PC-3 (cell line): ENCODE measurements at regions of chr1 and their contacts with region 1.

Region 1: DNA sequence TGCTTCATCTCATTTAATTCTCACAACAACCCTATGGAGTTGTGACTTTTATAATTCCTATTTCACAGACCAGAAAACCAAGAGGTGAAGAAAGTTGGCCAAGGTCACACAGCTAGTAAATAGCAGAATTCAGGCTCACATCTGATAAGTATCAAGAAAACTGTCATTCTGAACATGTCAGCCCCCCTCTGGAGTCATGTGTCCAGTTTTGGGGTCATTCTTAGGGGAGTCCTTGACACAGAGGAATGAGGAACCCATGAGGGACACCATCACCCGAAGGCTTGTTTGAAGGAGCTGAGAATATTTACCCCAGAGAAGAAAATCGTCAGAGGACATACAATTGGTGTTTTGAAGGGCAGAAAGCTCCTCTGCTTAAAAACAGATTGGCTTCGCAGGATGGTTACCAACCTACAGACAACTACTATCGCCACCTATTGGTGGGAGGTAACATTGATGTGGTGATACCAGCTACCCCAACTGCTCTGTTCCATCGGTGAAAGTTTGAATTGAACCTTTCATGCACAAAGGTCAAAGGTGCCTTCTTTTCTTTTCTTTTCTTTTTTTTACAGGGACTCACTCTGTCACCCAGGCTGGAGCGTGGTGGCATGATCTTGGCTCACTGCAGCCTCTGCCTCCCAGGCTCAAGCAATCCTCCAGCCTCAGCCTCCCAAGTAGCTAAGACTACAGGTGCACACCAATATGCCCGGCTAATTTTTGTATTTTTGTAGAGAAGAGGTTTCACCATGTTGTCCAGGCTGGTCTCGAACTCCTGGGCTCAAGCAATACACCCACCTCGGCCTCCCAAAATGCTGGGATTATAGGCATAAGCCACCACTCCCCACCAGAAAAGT is 31.3 kb downstream of the NCMAP start:
- DNase-seq: peak; percentile 73
- ATAC-seq: peak; percentile 84
- H3K4me3 ChIP-seq: no peak overlapping the region
- H3K27ac ChIP-seq: no peak overlapping the region
- H3K4me1 ChIP-seq: no peaks in the 10 kb centered on the region; the same call in 1 of the 2 replicates
- H3K27me3 ChIP-seq: no peaks in the 10 kb centered on the region
- CTCF ChIP-seq: peak; percentile 82

Region 2: DNA sequence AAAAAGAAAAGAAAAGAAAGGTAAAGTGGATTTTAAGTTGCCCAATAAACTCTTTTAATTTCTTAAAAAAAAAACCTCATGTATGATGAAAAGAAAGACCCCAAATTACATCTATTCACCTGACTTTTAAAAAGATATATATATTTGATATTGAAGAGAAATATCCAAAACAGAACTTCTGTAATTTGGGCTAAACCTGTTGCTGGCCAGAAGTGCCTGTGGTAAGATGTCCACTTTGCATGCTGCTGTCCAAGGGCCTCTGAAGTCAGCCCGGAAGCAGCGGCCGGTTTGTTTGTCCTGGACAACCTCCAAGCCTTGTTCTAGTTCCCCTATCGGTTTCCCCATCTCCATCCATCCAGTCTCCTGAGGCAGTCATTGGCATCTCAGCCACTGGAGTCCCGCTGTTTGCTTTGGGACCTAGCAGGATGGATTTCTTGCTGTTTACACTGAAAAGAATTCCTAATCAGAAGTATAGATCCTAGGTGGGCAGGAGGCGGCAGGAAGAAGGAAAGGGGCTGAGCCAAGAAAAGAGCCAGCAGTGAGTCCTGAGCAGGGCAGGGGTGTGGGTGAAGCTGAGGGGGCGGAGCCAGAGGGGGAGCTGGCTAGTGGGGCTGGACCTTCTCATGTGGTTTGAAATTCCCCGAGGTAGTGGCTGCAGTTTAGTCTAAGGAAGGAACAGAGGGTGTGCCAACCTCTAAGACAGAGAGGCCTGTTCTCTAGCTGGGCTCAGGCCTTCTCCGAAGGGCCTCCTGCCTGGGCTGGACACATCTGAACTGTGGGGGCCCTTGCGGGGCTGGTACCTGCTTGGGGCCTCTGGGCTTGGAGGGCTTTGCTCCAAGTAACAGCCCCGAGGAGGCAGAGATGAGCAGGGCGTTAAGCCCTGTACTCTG is 28.0 kb before region 1 on chr1:
- CTCF ChIA-PET with region 1: no interaction called
- POLR2A ChIA-PET with region 1: no interaction called
- intact Hi-C with region 1: no loop called
- DNase-seq: peak; percentile 88
- ATAC-seq: peak; percentile 86
- H3K4me3 ChIP-seq: no peak overlapping the region
- H3K27ac ChIP-seq: no peak overlapping the region
- H3K4me1 ChIP-seq: peaks cover 32% of the 10 kb centered on the region
- H3K27me3 ChIP-seq: no peaks in the 10 kb centered on the region
- CTCF ChIP-seq: no peak

Region 3: GRCh38 chr1:24619376-24619775 is 32.2 kb after region 1 on chr1:
- CTCF ChIA-PET with region 1: interaction called, 10 read pairs
- POLR2A ChIA-PET with region 1: no interaction called
- intact Hi-C with region 1: no loop called
- DNase-seq: no peak
- ATAC-seq: no peak
- H3K4me3 ChIP-seq: no peak overlapping the region
- H3K27ac ChIP-seq: no peak overlapping the region
- H3K4me1 ChIP-seq: no peaks in the 10 kb centered on the region
- H3K27me3 ChIP-seq: no peaks in the 10 kb centered on the region
- CTCF ChIP-seq: no peak